PC-3 (cell line): ENCODE measurements at regions of chr4 and their contacts with region 1.

Region 1: GRCh38 chr4:158895797-158896576 is 127.2 kb downstream of the FNIP2 start:
- DNase-seq: peak; percentile 32
- ATAC-seq: peak; percentile 78
- H3K4me3 ChIP-seq: no peak overlapping the region
- H3K27ac ChIP-seq: no peak overlapping the region
- H3K4me1 ChIP-seq: peaks cover 6% of the 10 kb centered on the region
- H3K27me3 ChIP-seq: no peaks in the 10 kb centered on the region
- CTCF ChIP-seq: peak; percentile 43; the same call in 1 of the 2 replicates

Region 2: DNA sequence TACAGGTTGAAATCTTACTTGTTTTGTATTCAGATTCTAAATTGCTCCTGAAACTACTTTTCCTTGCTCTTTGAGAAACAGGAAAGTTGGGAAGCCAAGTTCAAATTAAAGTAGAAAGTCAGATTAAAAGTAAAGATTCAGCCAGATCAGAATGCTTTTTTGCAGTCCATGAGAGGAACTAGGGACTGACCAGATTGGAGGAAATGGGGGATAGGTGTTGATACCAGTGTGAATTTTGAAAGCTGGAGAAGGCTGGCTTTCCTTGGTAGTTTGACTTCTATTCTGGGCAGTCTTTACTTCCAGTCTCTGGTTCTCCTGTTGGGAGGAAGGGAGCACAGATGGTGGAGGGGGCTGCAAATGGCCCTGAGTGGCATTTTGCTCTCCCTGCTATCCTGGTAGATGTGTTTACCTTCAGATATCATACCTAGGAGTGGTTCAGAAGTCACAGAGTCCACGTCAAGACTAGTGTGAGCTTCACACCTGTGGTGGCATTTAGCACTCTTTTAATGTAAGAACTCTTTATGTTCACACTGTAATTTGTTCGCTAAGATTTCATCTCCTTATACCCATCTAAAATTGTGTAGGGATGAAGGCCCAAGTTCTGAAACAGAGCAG is 58.4 kb before region 1 on chr4:
- CTCF ChIA-PET with region 1: no interaction called
- POLR2A ChIA-PET with region 1: interaction called, 23 read pairs
- intact Hi-C with region 1: no loop called
- DNase-seq: no peak
- ATAC-seq: no peak
- H3K4me3 ChIP-seq: no peak overlapping the region
- H3K27ac ChIP-seq: no peak overlapping the region
- H3K4me1 ChIP-seq: no peaks in the 10 kb centered on the region
- H3K27me3 ChIP-seq: no peaks in the 10 kb centered on the region
- CTCF ChIP-seq: no peak